ENCODE measurements at regions of chr19 and their contacts with region 1.

Region 1: DNA sequence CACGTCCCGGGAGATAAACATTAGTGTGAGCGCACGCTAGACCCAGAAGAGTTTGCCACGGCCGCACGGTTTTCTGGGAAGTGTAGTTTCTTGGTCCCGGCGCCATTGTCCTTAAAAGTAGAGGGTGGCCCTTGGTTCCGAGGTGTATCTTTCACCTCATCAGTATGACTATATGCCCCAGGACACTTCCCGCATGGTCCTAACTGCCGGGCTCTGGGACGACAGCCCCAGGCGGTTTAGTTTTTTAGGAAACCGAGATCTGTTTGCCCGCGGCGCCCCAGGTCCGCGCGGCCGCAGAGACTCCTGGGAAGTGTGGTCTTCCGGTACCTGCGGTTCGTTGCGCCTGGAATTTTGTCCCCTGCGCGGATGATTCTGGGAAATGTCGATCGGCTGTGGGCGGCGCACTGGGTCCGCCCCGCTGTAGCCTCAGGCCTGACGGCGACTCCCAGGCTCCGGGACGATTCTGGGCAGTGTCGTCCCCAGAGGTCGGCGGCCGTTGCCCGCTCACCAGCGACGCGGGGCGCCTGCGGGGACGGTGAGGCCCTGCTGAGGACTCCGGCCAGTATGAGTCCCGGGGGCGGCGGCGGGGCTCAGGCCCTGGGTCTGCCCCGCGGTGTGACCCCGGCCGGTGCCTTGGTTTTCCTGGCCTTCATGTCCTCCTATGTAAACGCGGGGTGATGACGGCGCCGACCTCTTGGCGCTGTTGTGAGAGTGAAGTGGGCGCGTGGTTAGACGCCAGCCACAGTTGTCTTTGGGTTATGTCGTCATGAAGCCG is at the start of gene ZNF181:
- DNase-seq: peak; percentile 86
- ATAC-seq: peak; percentile 92
- H3K4me3 ChIP-seq: peak within 1 kb of the TSS; percentile 75 to 79 (median 78)
- H3K27ac ChIP-seq: peak within 1 kb of the TSS; percentile 98
- H3K4me1 ChIP-seq: peaks cover 34% of the 10 kb centered on the region
- H3K27me3 ChIP-seq: no peaks in the 10 kb centered on the region; a peak in 1 of 5 replicates
- CTCF ChIP-seq: peak; percentile 41
- EP300 ChIP-seq: no peak
- POLR2A ChIP-seq: peak; percentile 75 to 81
- RAD21 ChIP-seq: peak; percentile 48; the same call in 1 of the 2 replicates
- total RNA-seq, gene ZNF181: 15.5 and 22.3 TPM in 2 replicates

Region 2: GRCh38 chr19:34687348-34687747 is 46.7 kb before region 1 on chr19:
- CTCF ChIA-PET with region 1: no interaction called
- POLR2A ChIA-PET with region 1: no interaction called
- in situ Hi-C with region 1: no loop called
- intact Hi-C with region 1: no loop called
- DNase-seq: no peak
- ATAC-seq: no peak
- H3K4me3 ChIP-seq: no peak overlapping the region
- H3K27ac ChIP-seq: no peak overlapping the region
- H3K4me1 ChIP-seq: peaks cover 15% of the 10 kb centered on the region
- H3K27me3 ChIP-seq: no peaks in the 10 kb centered on the region; a peak in 1 of 5 replicates
- CTCF ChIP-seq: no peak
- EP300 ChIP-seq: no peak
- POLR2A ChIP-seq: no peak
- RAD21 ChIP-seq: no peak

Region 3: DNA sequence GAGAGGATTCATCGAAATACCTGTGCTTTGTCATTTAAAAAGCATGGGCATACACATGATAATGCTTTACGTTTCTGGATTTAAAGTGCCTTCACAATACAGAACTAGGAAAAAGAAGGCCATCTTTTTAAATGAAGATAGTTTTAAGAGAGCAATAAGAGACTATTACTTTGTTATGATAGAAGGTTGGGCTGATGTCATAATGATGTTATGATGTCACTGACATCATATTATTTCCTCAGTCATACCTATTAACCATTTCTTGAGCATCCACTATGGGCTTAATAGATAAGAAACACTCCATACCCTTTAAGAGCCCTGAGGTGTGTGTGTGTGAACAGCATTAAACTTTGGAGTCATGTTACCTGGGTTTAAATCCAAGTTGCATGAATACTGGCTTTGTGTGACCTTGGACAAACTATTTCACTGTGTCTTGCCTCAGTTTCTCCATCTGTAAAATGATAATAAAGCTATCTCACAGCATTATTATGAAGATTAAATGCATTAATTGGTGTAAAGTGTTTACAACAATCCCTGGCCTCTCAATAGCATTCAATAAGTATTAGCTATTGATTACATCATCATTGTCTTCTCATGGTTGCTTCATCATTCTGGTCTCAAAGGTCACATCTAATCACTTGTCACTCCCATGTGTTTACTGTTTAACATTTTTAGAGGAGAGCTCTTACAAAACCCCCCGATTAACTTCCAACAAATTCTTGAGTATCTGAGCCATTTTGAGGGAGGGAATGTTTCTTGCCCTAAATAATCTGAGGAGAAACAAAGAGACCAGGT is 11.1 kb after region 1 on chr19:
- CTCF ChIA-PET with region 1: no interaction called
- POLR2A ChIA-PET with region 1: interaction called, 10 read pairs
- in situ Hi-C with region 1: no loop called
- intact Hi-C with region 1: no loop called
- DNase-seq: peak; percentile 64
- ATAC-seq: peak; percentile 38; the same call in 2 of the 3 replicates
- H3K4me3 ChIP-seq: no peak overlapping the region
- H3K27ac ChIP-seq: peak overlapping the region; percentile 55
- H3K4me1 ChIP-seq: peaks cover 22% of the 10 kb centered on the region
- H3K27me3 ChIP-seq: no peaks in the 10 kb centered on the region
- CTCF ChIP-seq: no peak
- EP300 ChIP-seq: 0 out of 4 replicates have a peak, but pooled peaks of 1 of the 2 experiments have one; percentile 24
- POLR2A ChIP-seq: no peak
- RAD21 ChIP-seq: no peak

Region 4: GRCh38 chr19:34772697-34773554 is 38.9 kb after region 1 on chr19 and contains the start of gene ZNF599:
- CTCF ChIA-PET with region 1: no interaction called
- POLR2A ChIA-PET with region 1: interaction called, 4 read pairs
- in situ Hi-C with region 1: no loop called
- intact Hi-C with region 1: loop called (anchors 1 kb)
- DNase-seq: peak; percentile 83
- ATAC-seq: peak; percentile 99
- H3K4me3 ChIP-seq: peak within 1 kb of the TSS; percentile 71 to 95 (median 79)
- H3K27ac ChIP-seq: peak within 1 kb of the TSS; percentile 70
- H3K4me1 ChIP-seq: peaks cover 12% of the 10 kb centered on the region
- H3K27me3 ChIP-seq: no peaks in the 10 kb centered on the region; a peak in 1 of 5 replicates
- CTCF ChIP-seq: no peak; the same call in 1 of the 2 replicates
- EP300 ChIP-seq: no peak
- POLR2A ChIP-seq: peak; percentile 67 to 86
- RAD21 ChIP-seq: peak; percentile 31; the same call in 1 of the 2 replicates
- total RNA-seq, gene ZNF599: 5.8 and 9.4 TPM in 2 replicates

Region 5: GRCh38 chr19:34926685-34927375 is 192.8 kb after region 1 on chr19 and contains the start of gene ZNF30:
- CTCF ChIA-PET with region 1: no interaction called
- POLR2A ChIA-PET with region 1: interaction called, 6 read pairs
- in situ Hi-C with region 1: no loop called
- intact Hi-C with region 1: loop called (anchors 1 kb)
- DNase-seq: peak; percentile 85
- ATAC-seq: peak; percentile 100
- H3K4me3 ChIP-seq: peak within 1 kb of the TSS; percentile 63 to 77 (median 65)
- H3K27ac ChIP-seq: peak within 1 kb of the TSS; percentile 78
- H3K4me1 ChIP-seq: peaks cover 15% of the 10 kb centered on the region
- H3K27me3 ChIP-seq: no peaks in the 10 kb centered on the region
- CTCF ChIP-seq: 0 out of 2 replicates have a peak, but pooled peaks have one; percentile 21
- EP300 ChIP-seq: no peak
- POLR2A ChIP-seq: peak; percentile 75 to 82
- RAD21 ChIP-seq: no peak; the same call in 1 of the 2 replicates
- total RNA-seq, gene ZNF30: 4.4 and 6.2 TPM in 2 replicates